HEK293 (cell line): ENCODE measurements at regions of chr10 and their contacts with region 1.

Region 1: DNA sequence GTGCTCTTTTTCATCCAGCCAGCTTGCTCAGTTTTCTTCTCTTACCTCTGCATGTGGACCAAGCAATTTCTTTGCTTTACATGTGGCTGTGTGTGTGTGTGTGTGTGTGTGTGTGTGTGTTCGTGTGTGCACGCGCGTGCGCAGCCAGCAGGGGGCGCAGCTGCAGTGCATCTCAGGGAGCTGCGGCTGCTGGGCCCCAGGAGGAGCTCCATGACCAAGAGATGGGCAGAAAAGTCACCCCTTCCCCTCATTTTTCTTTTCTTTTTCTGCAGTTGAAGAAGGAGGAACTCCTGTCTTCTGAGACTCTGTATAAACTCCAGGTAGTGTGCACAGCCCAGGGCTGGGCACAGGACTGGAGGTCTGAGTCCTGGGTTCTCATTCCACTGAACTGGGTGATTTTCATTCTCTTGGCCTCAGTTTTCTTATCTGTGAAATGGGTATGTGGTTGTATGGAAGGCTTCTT is 41.8 kb downstream of the BLNK start:
- H3K4me3 ChIP-seq: no peak overlapping the region
- H3K27ac ChIP-seq: no peak overlapping the region
- H3K4me1 ChIP-seq: no peaks in the 10 kb centered on the region
- CTCF ChIP-seq: peak; percentile 99

Region 2: GRCh38 chr10:96017191-96017687 is 212.4 kb before region 1 on chr10:
- CTCF ChIA-PET with region 1: interaction called, 28 read pairs
- POLR2A ChIA-PET with region 1: no interaction called
- H3K4me3 ChIP-seq: no peak overlapping the region
- H3K27ac ChIP-seq: no peak overlapping the region
- H3K4me1 ChIP-seq: no peaks in the 10 kb centered on the region
- CTCF ChIP-seq: no peak

Region 3: GRCh38 chr10:96208271-96208670 is 21.3 kb before region 1 on chr10:
- CTCF ChIA-PET with region 1: interaction called, 14 read pairs
- POLR2A ChIA-PET with region 1: no interaction called
- H3K4me3 ChIP-seq: no peak overlapping the region
- H3K27ac ChIP-seq: no peak overlapping the region
- H3K4me1 ChIP-seq: no peaks in the 10 kb centered on the region
- CTCF ChIP-seq: no peak

Region 4: DNA sequence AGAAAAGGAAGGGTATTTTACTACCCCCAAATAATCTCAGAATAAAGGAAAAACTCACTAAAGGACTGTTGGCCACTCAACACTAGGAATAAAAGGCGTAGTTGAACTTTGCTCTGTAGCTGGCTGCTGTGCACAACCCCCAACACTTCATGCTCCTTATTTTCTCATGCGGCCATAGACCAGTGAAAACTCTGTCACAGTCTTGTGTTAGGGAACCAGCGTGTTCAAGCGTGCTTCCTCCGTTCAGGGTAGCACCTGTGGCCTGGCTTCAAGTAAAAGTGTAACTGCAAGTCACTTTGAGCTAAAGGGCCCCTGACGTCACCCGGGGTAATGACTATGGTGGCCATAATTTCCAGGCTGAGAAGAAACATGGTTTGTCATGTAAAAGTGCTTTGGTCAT is 14.8 kb after region 1 on chr10:
- CTCF ChIA-PET with region 1: interaction called, 24 read pairs
- POLR2A ChIA-PET with region 1: no interaction called
- H3K4me3 ChIP-seq: no peak overlapping the region
- H3K27ac ChIP-seq: no peak overlapping the region
- H3K4me1 ChIP-seq: no peaks in the 10 kb centered on the region
- CTCF ChIP-seq: no peak

Region 5: DNA sequence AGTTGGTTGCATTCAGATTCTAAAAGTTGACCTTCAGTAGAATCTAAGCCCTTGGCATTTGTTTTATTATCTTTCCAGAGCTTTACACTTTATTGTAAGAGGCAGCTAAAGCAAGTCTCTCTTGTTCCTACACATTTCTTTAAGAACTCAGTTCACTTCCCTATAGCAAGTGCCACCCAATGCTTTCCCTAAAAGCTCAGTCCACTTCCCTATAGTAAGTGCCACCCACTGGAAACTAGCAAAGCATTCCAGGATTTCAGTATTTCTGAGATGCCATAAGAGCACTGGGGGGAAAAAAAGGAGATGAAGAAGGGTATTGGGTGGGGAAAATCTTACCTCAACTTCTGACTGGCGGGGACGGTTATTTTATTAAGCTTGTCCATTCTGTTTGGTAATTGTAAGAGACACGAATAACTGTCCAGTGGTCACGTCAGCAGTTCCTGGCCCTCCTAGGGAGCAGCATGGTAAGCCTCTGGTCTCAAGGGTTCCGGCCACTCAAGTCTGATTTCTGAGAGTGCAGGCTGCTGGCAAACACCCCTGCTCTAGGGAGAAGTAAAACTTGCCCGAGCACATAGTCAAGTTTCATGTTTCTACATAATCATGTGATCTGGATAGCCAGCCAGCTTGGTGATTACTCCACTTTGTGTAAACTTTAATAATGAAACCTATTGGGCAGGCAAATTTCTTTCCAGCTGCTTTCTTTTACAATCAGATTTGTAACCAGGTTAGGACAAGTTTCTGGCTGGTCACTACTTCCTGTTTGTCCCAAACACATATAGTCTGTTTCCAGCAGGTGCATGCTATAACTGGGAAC is 41.6 kb after region 1 on chr10 and contains the start of gene BLNK:
- CTCF ChIA-PET with region 1: interaction called, 16 read pairs
- POLR2A ChIA-PET with region 1: no interaction called
- H3K4me3 ChIP-seq: no peak within 1 kb of the TSS
- H3K27ac ChIP-seq: no peak within 1 kb of the TSS
- H3K4me1 ChIP-seq: no peaks in the 10 kb centered on the region
- CTCF ChIP-seq: no peak

Region 6: GRCh38 chr10:96292971-96293920 is 63.6 kb after region 1 on chr10:
- CTCF ChIA-PET with region 1: interaction called, 131 read pairs
- POLR2A ChIA-PET with region 1: no interaction called
- H3K4me3 ChIP-seq: no peak overlapping the region
- H3K27ac ChIP-seq: no peak overlapping the region
- H3K4me1 ChIP-seq: no peaks in the 10 kb centered on the region
- CTCF ChIP-seq: 0 out of 2 replicates have a peak, but pooled peaks have one; percentile 18

Region 7: DNA sequence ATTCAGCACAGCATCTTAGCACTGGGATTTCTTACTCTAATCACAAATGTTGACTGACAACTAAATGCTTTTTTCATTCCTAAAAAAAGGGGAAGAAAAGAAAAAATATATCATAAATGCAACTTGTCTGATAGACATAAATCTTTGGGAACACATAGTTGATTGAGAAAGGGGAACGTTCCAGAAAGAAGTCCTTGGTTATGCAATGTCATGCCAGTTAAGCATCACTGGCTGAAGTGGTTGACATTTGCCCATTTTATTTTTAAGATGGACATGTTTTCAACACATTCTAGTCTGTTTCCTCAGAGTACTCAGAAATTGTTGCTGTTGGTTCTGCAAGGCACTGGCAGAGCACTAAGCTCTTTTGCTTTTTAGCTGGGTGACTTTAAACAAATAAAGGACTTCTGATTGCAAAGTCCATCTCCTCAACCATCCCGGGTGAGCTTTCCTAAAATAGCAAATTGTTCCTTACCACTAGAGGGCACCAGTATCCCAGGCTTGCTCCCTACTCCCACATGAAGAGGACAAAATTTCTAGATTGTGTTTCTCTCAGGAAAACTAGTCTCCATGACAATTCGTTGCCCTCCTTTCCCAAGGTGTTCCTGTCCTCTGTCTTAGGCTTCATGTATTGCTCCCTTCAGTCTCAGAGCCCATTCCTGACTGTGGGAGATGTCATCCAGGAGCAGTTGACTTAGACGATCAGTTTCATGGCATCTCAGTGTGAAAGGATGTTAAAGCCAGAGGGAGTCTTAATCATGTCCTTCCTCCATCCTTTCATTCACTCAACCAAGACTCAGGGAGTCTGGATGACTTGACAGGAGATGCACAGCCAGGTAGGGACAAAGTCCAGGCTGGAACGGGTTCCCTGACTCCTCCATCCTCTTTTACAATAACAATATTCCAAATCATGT is 105.3 kb after region 1 on chr10:
- CTCF ChIA-PET with region 1: interaction called, 32 read pairs
- POLR2A ChIA-PET with region 1: no interaction called
- H3K4me3 ChIP-seq: no peak overlapping the region
- H3K27ac ChIP-seq: no peak overlapping the region
- H3K4me1 ChIP-seq: no peaks in the 10 kb centered on the region
- CTCF ChIP-seq: peak; percentile 23; the same call in 1 of the 2 replicates

Region 8: GRCh38 chr10:96586419-96587263 is 357.0 kb after region 1 on chr10 and contains the start of gene TM9SF3:
- CTCF ChIA-PET with region 1: no interaction called
- POLR2A ChIA-PET with region 1: no interaction called
- H3K4me3 ChIP-seq: peak within 1 kb of the TSS; percentile 82
- H3K27ac ChIP-seq: peak within 1 kb of the TSS; percentile 99
- H3K4me1 ChIP-seq: peaks cover 24% of the 10 kb centered on the region; the same call in 1 of the 2 replicates
- CTCF ChIP-seq: no peak